ENCODE measurements at regions of chr11 and their contacts with region 1.

Region 1: GRCh38 chr11:12893787-12894672 is 115.1 kb upstream of the RASSF10 start:
- DNase-seq: no peak

Region 2: DNA sequence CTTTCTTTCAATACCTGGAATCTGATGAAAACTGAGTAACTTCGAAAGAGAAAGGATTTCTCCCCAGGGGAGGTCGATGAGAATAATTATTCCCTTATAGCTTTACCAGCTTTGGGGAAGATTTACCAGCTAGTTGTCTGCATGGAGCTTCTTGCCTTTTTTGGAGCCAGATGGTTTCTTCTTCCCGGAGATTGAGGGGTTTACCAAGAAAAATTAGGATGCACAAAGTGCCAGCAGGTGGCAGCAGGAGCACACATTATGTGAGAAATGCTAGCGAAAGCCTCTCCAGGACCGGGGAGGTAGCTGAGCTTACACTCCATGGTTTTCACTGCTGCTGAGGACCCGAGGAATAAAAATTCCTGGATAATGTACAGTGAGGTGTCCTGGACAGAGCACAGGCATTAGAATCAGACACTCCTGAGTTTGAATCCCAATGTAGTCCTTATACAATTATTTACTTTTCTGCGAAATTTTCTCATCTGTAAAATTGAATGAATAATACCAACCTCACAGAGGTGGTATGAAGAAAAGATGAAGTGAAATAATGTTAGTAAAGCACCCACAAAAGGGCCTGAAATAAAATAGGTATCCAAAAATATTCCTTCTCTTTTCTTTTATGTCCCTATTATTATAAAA is 562.7 kb before region 1 on chr11:
- intact Hi-C with region 1: loop called in 1 of 2 experiments (anchors 5 kb)
- DNase-seq: peak; percentile 93

Region 3: DNA sequence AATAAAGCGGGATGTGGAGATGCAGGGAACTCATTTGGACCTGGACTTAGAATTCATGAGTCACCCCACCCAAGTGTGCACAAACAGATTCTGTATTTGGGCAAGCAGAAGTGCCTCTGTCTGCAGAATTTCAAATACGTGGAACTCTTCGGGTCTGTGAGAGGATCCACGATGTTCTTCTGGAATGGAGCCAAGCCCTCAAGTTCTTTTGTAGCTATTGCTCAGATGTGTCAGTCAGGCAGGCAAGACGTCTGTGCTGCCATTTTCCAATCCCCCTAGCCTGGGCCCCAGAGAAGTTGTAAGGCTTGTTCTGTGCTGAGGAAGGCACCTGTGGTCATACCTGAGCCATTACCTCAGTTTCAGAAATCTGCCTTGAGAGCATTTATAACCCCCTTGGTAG is 17.7 kb before region 1 on chr11:
- intact Hi-C with region 1: loop called in 1 of 2 experiments (anchors 1 kb)
- DNase-seq: no peak